Activated B cell treated with CpG ODN at 0.5 μM for 24 hours (primary cell): ENCODE measurements at regions of chr6 and their contacts with region 1.

Region 1: GRCh38 chr6:33391278-33391921 is at the start of gene KIFC1:
- DNase-seq: peak; percentile 95
- ATAC-seq: peak; percentile 88
- H3K4me3 Mint-ChIP-seq: peak within 1 kb of the TSS; percentile 79
- H3K27ac Mint-ChIP-seq: peak within 1 kb of the TSS; percentile 95
- H3K4me1 Mint-ChIP-seq: peaks cover 25% of the 10 kb centered on the region
- H3K27me3 Mint-ChIP-seq: no peaks in the 10 kb centered on the region
- CTCF ChIP-seq: peak; percentile 77
- total RNA-seq, gene KIFC1: 1.9 and 2.2 TPM in 2 replicates

Region 2: DNA sequence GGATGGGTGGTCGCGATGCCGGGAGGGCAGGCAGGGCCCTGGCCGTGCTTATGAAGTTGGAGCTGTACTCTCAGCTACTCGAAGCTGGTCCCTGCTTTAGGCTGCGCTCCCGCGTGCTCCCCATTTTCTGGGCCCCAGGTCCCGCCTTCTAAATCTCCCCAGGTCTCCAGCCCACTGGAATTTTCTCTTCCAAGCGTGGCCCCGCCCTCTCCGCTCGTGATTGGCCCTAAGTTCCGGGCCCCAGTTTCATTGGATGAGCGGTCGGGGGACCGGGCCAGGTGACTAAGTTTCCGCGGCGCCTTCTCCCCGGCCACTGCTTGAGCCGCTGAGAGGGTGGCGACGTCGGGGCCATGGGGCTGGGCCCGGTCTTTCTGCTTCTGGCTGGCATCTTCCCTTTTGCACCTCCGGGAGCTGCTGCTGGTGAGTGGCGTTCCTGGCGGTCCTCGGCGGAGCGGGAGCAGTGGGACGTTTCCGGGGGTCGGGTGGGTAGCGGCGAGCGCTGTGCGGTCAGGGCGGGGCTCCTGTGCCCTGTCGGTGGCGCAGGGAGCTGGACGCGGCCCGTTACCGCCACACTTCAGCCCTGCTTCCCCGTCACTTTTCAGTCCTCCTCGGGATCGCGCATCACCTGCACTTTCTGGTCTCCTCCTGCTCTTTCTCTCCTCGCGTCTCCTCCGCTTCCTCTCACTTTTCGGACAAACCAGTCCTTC is 1988.0 kb before region 1 on chr6 and contains the start of gene MICA:
- CTCF ChIA-PET with region 1: no interaction called
- POLR2A ChIA-PET with region 1: no interaction called
- intact Hi-C with region 1: loop called (anchors 2 kb)
- DNase-seq: peak; percentile 63
- ATAC-seq: peak; percentile 65
- H3K4me3 Mint-ChIP-seq: peak within 1 kb of the TSS; percentile 91
- H3K27ac Mint-ChIP-seq: peak within 1 kb of the TSS; percentile 80
- H3K4me1 Mint-ChIP-seq: peaks cover 63% of the 10 kb centered on the region
- H3K27me3 Mint-ChIP-seq: no peaks in the 10 kb centered on the region
- CTCF ChIP-seq: no peak
- total RNA-seq, gene MICA: 8.9 and 9.0 TPM in 2 replicates

Region 3: DNA sequence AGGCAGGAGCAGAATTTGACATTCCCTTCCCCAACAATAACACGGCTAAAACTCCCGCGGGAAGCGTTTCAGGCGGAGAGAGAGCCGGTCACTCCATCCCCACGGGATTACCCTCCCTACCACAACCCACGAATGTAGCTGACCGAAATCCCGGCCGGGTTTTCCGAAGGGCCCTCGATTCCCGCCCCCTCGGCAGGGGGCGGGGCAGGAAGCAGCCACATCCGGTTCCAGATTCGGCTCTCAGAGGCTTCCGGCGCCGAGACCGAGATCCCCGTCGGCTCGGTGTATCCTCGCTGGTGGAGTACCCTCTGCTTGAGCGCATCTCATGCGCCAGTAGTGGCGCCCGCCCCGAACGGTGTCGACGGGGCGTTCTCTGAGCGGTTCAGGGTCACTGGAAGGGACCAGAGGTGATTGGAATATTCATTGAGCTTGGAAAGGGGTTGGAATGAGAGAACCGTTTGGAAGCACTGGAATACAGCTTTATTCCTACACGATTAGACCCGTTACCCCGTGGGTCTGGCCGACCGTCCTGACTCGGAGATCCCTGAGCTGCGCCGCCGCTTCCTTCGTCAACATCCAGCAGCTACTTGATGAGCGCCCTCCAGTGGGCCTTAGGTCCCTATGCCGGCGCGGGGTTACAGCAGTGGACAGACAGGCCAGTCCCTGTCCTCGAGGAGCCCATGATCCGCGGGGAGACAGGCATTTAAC is 92.0 kb before region 1 on chr6:
- CTCF ChIA-PET with region 1: no interaction called
- POLR2A ChIA-PET with region 1: no interaction called
- intact Hi-C with region 1: loop called (anchors 1 kb)
- DNase-seq: peak; percentile 90
- ATAC-seq: peak; percentile 67
- H3K4me3 Mint-ChIP-seq: peak overlapping the region; percentile 96
- H3K27ac Mint-ChIP-seq: peak overlapping the region; percentile 98
- H3K4me1 Mint-ChIP-seq: peaks cover 34% of the 10 kb centered on the region
- H3K27me3 Mint-ChIP-seq: no peaks in the 10 kb centered on the region
- CTCF ChIP-seq: no peak

Region 4: DNA sequence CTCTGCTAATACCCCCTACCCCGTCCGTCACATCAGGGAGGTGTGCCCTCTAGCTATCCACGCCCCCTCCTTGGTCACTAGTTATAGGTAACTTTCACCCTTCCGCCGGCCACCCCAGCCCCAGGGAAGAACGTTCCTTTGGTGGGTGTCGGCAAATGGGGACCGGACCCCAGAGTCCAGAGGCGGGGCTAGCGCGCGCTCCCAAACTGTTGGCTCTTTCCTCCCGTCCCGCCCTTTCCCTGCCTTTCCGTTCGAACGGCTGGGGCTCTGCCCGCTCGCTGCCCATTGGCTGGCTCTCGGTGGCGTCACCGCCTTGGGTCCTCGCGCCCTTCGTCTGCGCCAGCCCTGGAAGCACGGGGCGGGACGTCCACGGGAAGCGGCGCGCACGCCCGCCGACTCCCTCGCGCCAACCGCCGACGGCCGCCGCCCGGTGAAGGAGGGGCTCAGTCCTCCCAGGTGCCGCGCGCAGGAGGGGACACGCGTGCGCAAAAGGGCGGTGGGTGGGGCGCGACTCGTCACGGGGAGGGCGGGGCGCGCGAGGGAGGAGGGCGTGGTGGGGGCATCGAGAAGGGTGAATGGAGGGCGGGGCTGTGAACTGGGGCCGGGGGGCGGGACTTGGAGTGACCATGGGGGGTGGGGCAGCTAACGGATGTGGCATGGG is 18.8 kb after region 1 on chr6:
- CTCF ChIA-PET with region 1: no interaction called
- POLR2A ChIA-PET with region 1: interaction called, 4 read pairs
- intact Hi-C with region 1: loop called (anchors 1 kb)
- DNase-seq: peak; percentile 93
- ATAC-seq: peak; percentile 74
- H3K4me3 Mint-ChIP-seq: peak overlapping the region; percentile 88
- H3K27ac Mint-ChIP-seq: peak overlapping the region; percentile 87
- H3K4me1 Mint-ChIP-seq: peaks cover 47% of the 10 kb centered on the region
- H3K27me3 Mint-ChIP-seq: no peaks in the 10 kb centered on the region
- CTCF ChIP-seq: no peak

Region 5: DNA sequence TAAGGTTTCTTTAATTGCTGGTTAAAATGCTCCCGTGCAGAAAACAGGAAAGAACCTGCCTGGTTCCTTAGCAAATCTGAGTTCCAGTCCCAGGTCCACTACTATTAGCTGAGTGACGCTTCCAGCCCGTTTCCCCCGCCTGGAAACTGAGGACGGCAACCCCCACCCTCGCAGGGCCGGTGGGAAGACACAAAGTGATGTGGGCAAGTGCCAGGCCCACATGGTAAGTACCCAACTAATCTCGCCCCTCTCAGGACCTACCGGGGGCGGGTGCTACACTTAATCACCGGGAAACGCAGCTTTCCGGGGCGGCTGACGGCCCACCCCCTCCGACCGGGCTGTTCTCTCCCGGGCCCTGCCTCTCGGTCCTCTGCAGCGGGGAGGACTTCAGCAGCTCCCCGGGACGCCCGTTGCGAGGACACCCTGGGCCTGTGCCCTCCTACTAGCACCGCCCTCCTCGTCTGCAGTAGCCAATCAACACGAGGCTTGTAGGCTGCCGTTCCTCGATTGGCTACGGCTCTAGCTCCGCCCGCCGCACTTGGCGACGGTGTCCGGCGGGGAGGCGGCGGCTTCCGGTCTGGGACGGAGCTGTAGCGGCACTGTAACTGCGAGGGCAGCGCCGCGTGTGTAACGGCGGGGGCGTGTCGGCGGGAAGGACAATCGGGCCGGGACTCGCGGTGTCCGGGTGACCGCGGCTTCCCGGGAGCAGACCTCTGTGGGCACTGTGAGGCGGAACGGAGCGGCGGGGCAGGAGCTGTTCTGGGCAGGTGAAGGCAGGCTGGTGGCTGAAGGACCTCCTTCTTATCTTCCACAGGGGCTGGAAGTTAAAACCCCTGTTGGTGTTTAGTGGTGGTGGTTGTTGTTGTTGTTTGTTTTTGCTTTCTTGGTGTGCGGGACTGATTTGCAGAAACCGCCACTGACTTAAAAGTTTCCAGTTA is 62.9 kb after region 1 on chr6 and contains the start of gene ZBTB9:
- CTCF ChIA-PET with region 1: no interaction called
- POLR2A ChIA-PET with region 1: interaction called, 7 read pairs
- intact Hi-C with region 1: loop called (anchors 1 kb)
- DNase-seq: peak; percentile 87
- ATAC-seq: peak; percentile 100
- H3K4me3 Mint-ChIP-seq: peak within 1 kb of the TSS; percentile 97
- H3K27ac Mint-ChIP-seq: peak within 1 kb of the TSS; percentile 88
- H3K4me1 Mint-ChIP-seq: peaks cover 26% of the 10 kb centered on the region
- H3K27me3 Mint-ChIP-seq: no peaks in the 10 kb centered on the region
- CTCF ChIP-seq: no peak
- total RNA-seq, gene ZBTB9: 10.7 and 12.5 TPM in 2 replicates

Region 6: GRCh38 chr6:33579828-33580714 is 188.7 kb after region 1 on chr6 and contains the start of gene BAK1:
- CTCF ChIA-PET with region 1: interaction called, 5 read pairs
- POLR2A ChIA-PET with region 1: interaction called, 5 read pairs
- intact Hi-C with region 1: loop called (anchors 1 kb)
- DNase-seq: peak; percentile 72
- ATAC-seq: peak; percentile 97
- H3K4me3 Mint-ChIP-seq: peak within 1 kb of the TSS; percentile 88
- H3K27ac Mint-ChIP-seq: peak within 1 kb of the TSS; percentile 89
- H3K4me1 Mint-ChIP-seq: peaks cover 45% of the 10 kb centered on the region
- H3K27me3 Mint-ChIP-seq: no peaks in the 10 kb centered on the region
- CTCF ChIP-seq: no peak
- total RNA-seq, gene BAK1: 29.5 and 29.6 TPM in 2 replicates

Region 7: GRCh38 chr6:33711140-33712129 is 320.0 kb after region 1 on chr6 and contains the start of gene UQCC2:
- CTCF ChIA-PET with region 1: no interaction called
- POLR2A ChIA-PET with region 1: no interaction called
- intact Hi-C with region 1: loop called (anchors 1 kb)
- DNase-seq: peak; percentile 93
- ATAC-seq: peak; percentile 86
- H3K4me3 Mint-ChIP-seq: peak within 1 kb of the TSS; percentile 98
- H3K27ac Mint-ChIP-seq: peak within 1 kb of the TSS; percentile 99
- H3K4me1 Mint-ChIP-seq: peaks cover 29% of the 10 kb centered on the region
- H3K27me3 Mint-ChIP-seq: no peaks in the 10 kb centered on the region
- CTCF ChIP-seq: no peak
- total RNA-seq, gene UQCC2: 26.2 and 37.5 TPM in 2 replicates